Sigmoid colon (tissue), 7 donors: ENCODE measurements at regions of chr16 and their contacts with region 1.

Region 1: GRCh38 chr16:46883690-46884512 is at the start of gene GPT2:
- DNase-seq: peak; percentile 97
- H3K4me3 ChIP-seq: peak within 1 kb of the TSS; percentile 54 to 87 (median 72)
- H3K27ac ChIP-seq: peak within 1 kb of the TSS; percentile 68 to 75 (median 70)
- H3K4me1 ChIP-seq: peaks cover 0 to 19% (median 15%) of the 10 kb centered on the region in 4 donors
- H3K27me3 ChIP-seq: peaks cover 0 to 12% (median 0%) of the 10 kb centered on the region in 3 donors
- CTCF ChIP-seq: no peak
- EP300 ChIP-seq: no peak
- POLR2A ChIP-seq: peak in 1 of 2 donors; percentile 14
- total RNA-seq, gene GPT2: 3.3 to 17.1 (median 10.7) TPM

Region 2: GRCh38 chr16:46583036-46583435 is 300.9 kb before region 1 on chr16:
- intact Hi-C with region 1: no loop called
- DNase-seq: no peak
- H3K4me3 ChIP-seq: no peak overlapping the region
- H3K27ac ChIP-seq: no peak overlapping the region
- H3K4me1 ChIP-seq: no peaks in the 10 kb centered on the region
- H3K27me3 ChIP-seq: no peaks in the 10 kb centered on the region
- CTCF ChIP-seq: no peak
- EP300 ChIP-seq: no peak
- POLR2A ChIP-seq: no peak

Region 3: GRCh38 chr16:46736695-46737094 is 147.2 kb before region 1 on chr16:
- intact Hi-C with region 1: no loop called
- DNase-seq: peak; percentile 45
- H3K4me3 ChIP-seq: no peak overlapping the region
- H3K27ac ChIP-seq: no peak overlapping the region
- H3K4me1 ChIP-seq: no peaks in the 10 kb centered on the region
- H3K27me3 ChIP-seq: no peaks in the 10 kb centered on the region
- CTCF ChIP-seq: no peak
- EP300 ChIP-seq: no peak
- POLR2A ChIP-seq: no peak

Region 4: DNA sequence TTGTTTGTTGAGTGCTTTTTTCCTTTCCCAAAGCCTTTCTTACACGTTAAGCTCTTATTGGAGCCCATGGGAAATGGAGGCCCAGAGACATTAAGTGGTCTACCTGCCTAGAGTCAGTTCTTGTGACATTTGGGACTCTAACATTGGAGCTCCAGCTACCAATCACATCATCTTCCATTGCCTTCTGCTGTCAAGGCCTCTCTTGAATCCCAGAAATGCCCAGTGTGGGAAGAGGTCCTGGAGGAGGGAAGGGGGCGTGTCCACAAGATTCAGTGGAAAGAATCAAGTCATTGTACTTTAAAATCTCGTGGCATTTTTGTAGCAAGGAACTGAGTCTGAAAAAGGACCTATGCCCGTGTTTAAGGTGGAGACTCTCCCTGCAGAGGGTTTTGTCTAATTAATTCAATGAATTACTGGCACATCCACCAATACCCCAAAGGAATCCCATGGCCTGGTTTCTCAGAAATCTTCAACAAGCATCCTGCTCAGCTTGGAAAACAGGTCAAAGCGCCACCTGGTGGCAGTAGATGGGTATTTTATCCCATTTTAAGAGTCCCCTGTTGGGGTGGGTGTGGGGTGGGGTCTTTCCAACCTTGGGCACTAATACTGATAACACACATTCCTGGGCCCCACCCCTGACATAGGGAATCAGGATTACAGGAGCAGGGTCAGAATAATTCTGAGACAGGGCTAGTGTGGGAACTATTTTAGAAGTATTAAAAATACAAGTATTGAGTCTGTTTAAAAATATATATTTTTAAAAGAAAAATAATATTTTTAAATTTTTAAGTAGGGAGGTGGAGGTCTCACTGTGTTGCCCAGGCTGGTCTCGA is 24.9 kb after region 1 on chr16:
- intact Hi-C with region 1: loop called (anchors 2 kb)
- DNase-seq: no peak
- H3K4me3 ChIP-seq: no peak overlapping the region
- H3K27ac ChIP-seq: no peak overlapping the region
- H3K4me1 ChIP-seq: peaks cover 0 to 5% (median 0%) of the 10 kb centered on the region in 4 donors
- H3K27me3 ChIP-seq: no peaks in the 10 kb centered on the region
- CTCF ChIP-seq: peak in 3 of 4 experiments; percentile 69 to 85 (median 74)
- EP300 ChIP-seq: no peak
- POLR2A ChIP-seq: no peak

Region 5: DNA sequence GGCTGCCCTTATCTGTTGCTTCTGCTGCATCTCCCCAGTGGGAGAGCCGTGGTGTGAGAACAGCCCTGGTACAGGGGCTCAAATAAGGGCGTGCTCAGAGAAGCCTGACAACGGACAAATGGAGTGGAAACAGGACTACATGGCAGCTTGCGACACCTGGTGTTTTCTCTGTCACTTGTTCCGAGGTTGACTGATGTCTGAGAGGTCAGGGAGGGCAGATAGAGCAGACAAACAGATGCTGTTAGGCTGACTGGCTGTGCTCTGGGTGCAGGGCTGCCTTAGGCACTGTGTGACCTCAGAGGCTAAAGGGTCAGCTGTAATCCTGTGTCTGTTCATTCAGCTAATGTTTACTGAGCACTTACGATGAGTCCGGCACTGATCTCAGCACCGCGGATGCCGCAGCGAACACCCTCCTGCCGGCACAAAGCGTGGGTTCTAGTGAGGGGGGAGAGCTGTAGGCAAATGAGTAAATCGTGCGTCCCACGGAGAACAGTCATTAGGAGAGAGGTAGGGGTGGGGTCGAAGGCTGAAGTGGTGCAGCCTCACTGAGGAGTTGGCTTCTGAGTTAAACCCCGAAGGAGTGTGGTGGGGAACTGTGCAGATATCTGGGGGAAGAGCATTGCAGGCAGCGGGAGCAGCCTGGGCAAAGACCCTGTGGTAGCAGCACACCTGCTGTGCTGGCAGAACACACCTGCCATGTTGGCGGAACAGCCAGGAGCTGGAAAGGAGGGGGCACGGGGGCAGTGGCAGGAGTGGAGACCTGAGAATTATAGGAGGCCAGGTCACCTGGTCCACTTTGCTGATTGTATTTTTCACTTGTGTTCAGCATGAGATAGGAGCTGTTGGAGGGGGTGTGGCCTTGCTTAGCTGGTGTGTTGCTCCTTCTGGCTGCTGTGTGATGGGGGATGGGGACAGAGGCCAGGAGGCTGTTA is 35.2 kb after region 1 on chr16:
- intact Hi-C with region 1: no loop called
- DNase-seq: no peak
- H3K4me3 ChIP-seq: no peak overlapping the region
- H3K27ac ChIP-seq: no peak overlapping the region
- H3K4me1 ChIP-seq: no peaks in the 10 kb centered on the region
- H3K27me3 ChIP-seq: no peaks in the 10 kb centered on the region
- CTCF ChIP-seq: no peak
- EP300 ChIP-seq: no peak
- POLR2A ChIP-seq: no peak